Activated B cell treated with CpG ODN at 0.5 μM for 24 hours (primary cell): ENCODE measurements at regions of chr15 and their contacts with region 1.

Region 1: DNA sequence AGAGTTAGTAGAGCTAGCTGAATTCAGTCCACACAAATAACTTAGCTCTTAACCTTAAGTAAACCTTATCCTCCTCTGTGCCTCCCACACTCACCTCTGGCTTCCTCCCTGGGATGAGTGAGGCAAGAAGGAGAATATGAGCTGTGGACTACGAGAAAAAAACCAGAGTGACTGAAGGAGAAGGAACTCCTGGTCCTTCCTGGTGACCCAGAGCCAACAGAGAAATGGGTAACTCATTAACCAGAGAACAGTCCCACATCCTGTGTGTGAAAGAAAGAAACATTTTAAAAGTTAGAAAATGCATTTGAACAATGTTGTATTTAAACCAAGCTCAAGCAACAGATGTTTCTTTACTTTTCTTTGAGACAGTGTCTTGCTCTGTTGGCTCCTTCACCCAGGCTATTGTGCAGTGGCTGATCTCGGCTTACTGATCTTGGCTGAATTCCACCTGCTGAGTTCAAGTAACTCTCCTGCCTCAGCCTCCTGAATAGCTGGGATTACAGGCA is 27.5 kb upstream of the FAM81A start:
- DNase-seq: no peak
- ATAC-seq: no peak
- H3K4me3 Mint-ChIP-seq: peak overlapping the region; percentile 73
- H3K27ac Mint-ChIP-seq: peak overlapping the region; percentile 98
- H3K4me1 Mint-ChIP-seq: peaks cover 84% of the 10 kb centered on the region
- H3K27me3 Mint-ChIP-seq: no peaks in the 10 kb centered on the region
- CTCF ChIP-seq: no peak

Region 2: DNA sequence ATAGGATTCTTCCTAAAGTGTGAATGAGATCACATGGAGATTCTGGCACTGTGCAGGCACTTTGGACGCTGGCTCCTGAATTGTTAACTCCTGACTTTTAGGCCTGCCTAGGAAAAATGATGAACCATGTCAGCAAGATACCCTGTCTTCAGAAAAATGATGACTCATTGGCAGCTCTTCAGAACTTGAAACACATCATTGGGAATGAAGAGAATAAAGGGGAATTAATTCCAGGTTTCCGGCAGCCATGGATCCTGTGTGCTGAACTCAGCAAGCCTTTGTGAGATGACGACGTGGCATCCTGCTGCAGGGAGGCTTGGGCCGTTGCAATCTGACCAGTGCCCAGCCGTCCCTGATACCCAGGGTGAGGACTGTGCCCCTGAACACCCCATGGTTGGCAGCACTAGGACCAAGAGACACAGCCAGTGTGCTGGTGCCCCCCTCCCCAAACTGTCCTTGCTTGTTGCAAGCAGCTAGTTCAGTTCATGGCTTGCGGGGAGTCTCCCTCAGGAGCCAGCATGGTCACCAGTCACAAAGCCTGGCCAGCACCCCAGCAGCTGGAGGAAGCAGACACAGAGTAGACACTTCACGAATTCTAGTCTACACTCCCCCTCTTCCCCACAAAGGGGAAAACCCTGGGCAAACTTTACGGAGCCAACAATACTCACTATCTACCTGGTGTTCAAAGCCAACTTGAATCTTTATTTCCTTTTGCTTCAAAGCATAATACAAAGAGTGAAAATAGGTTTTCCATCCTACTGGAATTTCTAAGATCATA is 986.4 kb before region 1 on chr15:
- CTCF ChIA-PET with region 1: no interaction called
- POLR2A ChIA-PET with region 1: no interaction called
- intact Hi-C with region 1: no loop called
- DNase-seq: no peak
- ATAC-seq: no peak
- H3K4me3 Mint-ChIP-seq: no peak overlapping the region
- H3K27ac Mint-ChIP-seq: no peak overlapping the region
- H3K4me1 Mint-ChIP-seq: no peaks in the 10 kb centered on the region
- H3K27me3 Mint-ChIP-seq: no peaks in the 10 kb centered on the region
- CTCF ChIP-seq: no peak

Region 3: GRCh38 chr15:59174835-59175831 is 235.3 kb before region 1 on chr15:
- CTCF ChIA-PET with region 1: interaction called, 15 read pairs
- POLR2A ChIA-PET with region 1: interaction called, 10 read pairs
- intact Hi-C with region 1: loop called (anchors 1 kb)
- DNase-seq: no peak
- ATAC-seq: peak; percentile 99
- H3K4me3 Mint-ChIP-seq: no peak overlapping the region
- H3K27ac Mint-ChIP-seq: peak overlapping the region; percentile 20
- H3K4me1 Mint-ChIP-seq: peaks cover 15% of the 10 kb centered on the region
- H3K27me3 Mint-ChIP-seq: no peaks in the 10 kb centered on the region
- CTCF ChIP-seq: no peak

Region 4: DNA sequence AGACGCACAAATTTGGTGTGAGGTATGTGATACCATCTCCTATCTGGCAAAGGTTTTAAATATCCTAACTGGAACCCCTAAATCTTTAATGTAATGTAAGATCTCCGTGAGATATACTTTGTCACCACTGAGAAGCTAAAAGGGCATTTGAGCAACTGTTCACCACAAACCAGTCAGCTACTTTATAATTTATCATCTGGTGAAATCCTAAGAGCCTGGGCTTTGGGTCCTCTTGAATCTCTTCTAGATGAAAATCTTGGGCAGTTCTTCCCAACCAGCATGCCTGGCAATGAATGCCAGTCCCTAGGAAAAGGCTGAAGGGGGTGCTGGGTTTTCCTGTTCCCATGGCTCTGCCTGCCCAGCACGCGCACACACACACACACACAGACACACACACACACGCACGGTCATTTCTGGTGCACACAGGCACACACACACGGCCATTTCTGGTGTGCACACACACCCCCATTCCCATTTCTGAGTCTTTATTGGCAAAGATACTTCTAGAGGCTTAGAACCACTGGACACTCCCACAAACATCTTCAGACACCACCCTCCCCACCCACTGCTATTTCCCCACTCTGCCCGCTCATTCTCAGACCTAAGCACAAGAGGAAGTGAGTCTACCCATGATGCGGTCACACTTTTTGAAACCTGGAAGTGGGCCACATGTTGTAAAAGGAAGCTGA is 110.4 kb before region 1 on chr15:
- CTCF ChIA-PET with region 1: interaction called, 9 read pairs
- POLR2A ChIA-PET with region 1: interaction called, 18 read pairs
- intact Hi-C with region 1: loop called (anchors 1 kb)
- DNase-seq: peak; percentile 58
- ATAC-seq: peak; percentile 76
- H3K4me3 Mint-ChIP-seq: peak overlapping the region; percentile 71
- H3K27ac Mint-ChIP-seq: peak overlapping the region; percentile 94
- H3K4me1 Mint-ChIP-seq: peaks cover 93% of the 10 kb centered on the region
- H3K27me3 Mint-ChIP-seq: no peaks in the 10 kb centered on the region
- CTCF ChIP-seq: no peak

Region 5: DNA sequence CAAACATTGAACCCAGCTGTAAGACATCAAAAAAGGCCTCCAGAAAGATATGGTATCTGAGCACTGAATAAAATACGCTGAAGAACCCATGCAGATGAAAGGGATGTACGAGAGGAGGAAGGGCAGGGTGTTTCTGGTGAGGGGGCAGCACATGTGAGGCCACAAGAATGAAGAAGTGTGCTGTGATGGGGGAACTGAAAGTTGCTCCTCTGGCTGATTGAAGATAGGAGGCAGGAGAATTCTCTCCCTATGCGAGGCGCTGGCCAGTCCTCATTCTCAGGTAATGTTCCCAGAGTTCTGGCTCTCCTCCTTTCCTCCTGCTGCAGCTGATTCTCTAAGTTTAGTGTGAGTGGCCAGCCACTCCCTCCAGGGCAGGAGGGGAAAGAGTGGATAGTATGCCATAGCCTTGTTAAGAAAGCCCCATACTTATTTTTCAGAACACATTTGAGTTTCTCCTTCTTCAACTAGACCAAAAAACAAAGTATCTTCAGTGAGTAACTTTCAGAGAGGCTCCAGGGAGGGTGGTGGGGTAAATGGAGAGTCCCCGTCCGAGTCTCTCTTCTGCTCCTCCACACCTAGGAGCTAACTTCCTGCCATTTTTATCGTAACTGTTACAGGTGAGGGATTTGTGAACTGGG is 10.9 kb before region 1 on chr15:
- CTCF ChIA-PET with region 1: interaction called, 28 read pairs
- POLR2A ChIA-PET with region 1: interaction called, 63 read pairs
- intact Hi-C with region 1: loop called (anchors 1 kb)
- DNase-seq: peak; percentile 46
- ATAC-seq: peak; percentile 92
- H3K4me3 Mint-ChIP-seq: peak overlapping the region; percentile 78
- H3K27ac Mint-ChIP-seq: peak overlapping the region; percentile 93
- H3K4me1 Mint-ChIP-seq: peaks cover 78% of the 10 kb centered on the region
- H3K27me3 Mint-ChIP-seq: no peaks in the 10 kb centered on the region
- CTCF ChIP-seq: no peak

Region 6: DNA sequence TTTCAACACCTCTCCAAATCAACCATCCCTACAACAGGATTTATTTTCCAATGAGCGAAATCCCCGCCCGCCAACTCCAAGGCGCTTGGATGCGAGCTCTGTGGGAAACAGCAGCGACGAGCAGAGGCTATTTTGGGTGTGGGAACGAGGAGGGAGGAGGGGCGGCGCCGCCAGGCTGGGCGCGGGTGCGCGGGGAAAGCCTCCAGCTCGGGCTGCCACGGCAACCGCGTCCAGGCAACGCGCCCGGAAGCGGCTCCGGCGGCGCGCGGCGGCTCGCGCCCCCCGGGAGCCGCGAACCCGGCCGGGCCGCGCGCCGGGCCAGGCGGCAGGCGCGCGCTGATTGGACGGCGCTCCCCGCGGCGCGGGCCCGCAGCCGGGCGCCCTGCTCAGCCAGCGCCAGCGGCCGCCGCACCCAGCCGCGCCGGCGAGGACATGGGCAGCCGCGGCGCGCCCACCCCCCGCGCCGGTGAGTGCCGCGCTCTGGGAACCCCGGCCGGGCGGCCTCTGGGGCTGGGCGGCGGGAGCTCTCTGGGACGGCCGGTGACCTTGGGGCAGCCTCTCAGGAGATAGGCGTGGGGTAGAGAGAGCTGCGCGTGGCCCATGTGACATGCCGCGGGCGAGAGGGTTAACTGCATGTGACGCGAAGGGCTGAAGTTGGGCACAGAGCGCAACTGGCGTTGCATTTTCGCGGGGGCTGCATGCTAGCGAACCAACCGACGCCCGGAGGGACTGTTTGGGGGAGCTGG is 27.5 kb after region 1 on chr15 and contains the start of gene FAM81A:
- CTCF ChIA-PET with region 1: interaction called, 4 read pairs
- POLR2A ChIA-PET with region 1: interaction called, 14 read pairs
- intact Hi-C with region 1: loop called (anchors 1 kb)
- DNase-seq: peak; percentile 65
- ATAC-seq: peak; percentile 82
- H3K4me3 Mint-ChIP-seq: peak within 1 kb of the TSS; percentile 88
- H3K27ac Mint-ChIP-seq: peak within 1 kb of the TSS; percentile 65
- H3K4me1 Mint-ChIP-seq: peaks cover 42% of the 10 kb centered on the region
- H3K27me3 Mint-ChIP-seq: peaks cover 3% of the 10 kb centered on the region
- CTCF ChIP-seq: no peak
- total RNA-seq, gene FAM81A: 4.8 and 6.2 TPM in 2 replicates